Gastrocnemius medialis (tissue), 4 donors: ENCODE measurements at regions of chr14 and their contacts with region 1.

Region 1: DNA sequence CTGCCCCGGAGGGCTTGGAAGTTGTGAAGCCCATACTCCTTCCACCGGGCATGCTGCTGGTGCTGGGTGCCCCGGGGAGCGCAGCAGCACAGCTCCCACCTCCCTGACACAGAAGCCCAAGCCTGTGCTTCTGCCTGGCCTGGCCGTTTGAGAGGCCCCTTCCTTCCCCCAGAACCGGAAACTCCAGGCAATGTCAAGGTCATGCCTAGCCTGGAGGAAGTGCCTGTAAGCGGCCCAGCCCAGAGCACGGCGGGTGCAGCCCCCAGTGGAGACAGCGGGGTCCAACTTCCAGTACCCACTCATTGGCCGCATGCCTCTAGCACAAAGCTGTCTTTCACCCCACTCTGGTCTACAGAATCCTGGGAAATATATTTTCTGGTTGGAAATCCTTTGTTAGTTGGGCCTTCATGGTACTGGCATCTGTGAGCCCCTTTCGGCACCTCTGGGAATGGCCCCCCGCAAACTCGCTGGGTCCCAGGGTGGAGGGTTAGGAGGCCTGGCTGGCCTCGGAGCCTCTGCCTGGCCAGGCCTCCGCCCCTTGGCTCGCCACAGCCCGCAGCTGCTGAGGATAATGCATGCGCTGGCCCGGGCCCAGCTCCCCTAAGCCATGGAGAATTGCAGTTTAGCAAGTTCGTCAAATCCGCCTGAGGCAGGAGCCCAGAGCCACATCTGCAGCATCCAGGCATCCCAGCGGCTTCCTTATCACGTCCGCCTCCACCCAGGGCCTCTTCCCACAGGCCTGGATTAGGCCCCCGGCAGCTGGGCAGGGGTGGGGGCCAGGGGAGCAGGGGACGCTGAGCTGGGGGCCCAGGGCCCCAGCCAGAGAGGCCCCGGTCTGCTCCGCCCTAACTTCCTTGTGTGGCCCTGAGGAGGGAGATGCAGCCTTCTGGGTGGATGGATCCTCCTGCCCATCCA is 48.9 kb upstream of the DLK1 start:
- DNase-seq: peak in 1 of 2 donors; percentile 47
- ATAC-seq: peak; percentile 59 to 60
- H3K4me3 ChIP-seq: no peak overlapping the region
- H3K27ac ChIP-seq: peak overlapping the region; percentile 44 to 68 (median 58)
- H3K4me1 ChIP-seq: peaks cover 15 to 24% of the 10 kb centered on the region in 2 donors
- H3K27me3 ChIP-seq: peaks cover 0 to 5% (median 0%) of the 10 kb centered on the region in 3 donors
- CTCF ChIP-seq: no peak
- POLR2A ChIP-seq: no peak

Region 2: DNA sequence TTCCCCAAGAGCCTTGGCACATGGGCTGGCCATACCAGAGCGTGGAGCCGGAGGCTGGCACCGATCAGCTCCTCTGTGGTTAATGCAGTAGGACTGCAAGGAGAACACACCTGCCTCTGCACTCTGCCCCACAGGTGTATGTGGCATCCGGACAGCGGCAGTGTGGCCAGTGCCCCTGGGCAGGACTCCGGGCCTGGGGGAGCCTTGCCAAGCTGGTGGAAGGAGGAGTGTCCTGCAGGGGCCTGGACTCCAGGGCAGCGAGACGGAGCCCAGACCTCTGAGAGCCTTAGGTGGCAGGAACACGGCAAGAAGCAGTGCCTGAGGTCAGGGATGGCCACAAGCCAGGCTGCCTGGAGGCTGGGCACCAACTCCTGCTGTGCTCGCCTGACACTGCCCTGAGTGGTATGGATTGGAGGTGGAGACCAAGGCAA is 85.3 kb before region 1 on chr14:
- in situ Hi-C with region 1: no loop called
- intact Hi-C with region 1: no loop called
- DNase-seq: peak in 1 of 2 donors; percentile 7
- ATAC-seq: no peak
- H3K4me3 ChIP-seq: no peak overlapping the region
- H3K27ac ChIP-seq: no peak overlapping the region
- H3K4me1 ChIP-seq: no peaks in the 10 kb centered on the region
- H3K27me3 ChIP-seq: peaks cover 12 to 26% (median 20%) of the 10 kb centered on the region in 3 donors
- CTCF ChIP-seq: no peak
- POLR2A ChIP-seq: no peak

Region 3: GRCh38 chr14:100709289-100710284 is 31.8 kb after region 1 on chr14:
- in situ Hi-C with region 1: no loop called
- intact Hi-C with region 1: loop called (anchors 5 kb)
- DNase-seq: no peak
- ATAC-seq: peak in 1 of 2 donors; percentile 57
- H3K4me3 ChIP-seq: peak overlapping the region in 3 of 4 donors; percentile 5 to 44 (median 33)
- H3K27ac ChIP-seq: peak overlapping the region in 2 of 4 donors; percentile 33 to 44
- H3K4me1 ChIP-seq: peaks cover 3 to 18% of the 10 kb centered on the region in 2 donors
- H3K27me3 ChIP-seq: peaks cover 2 to 15% (median 4%) of the 10 kb centered on the region in 3 donors
- CTCF ChIP-seq: peak in 3 of 5 experiments; percentile 49 to 75 (median 51)
- POLR2A ChIP-seq: no peak